MCF 10A (cell line): ENCODE measurements at regions of chr16 and their contacts with region 1.

Region 1: DNA sequence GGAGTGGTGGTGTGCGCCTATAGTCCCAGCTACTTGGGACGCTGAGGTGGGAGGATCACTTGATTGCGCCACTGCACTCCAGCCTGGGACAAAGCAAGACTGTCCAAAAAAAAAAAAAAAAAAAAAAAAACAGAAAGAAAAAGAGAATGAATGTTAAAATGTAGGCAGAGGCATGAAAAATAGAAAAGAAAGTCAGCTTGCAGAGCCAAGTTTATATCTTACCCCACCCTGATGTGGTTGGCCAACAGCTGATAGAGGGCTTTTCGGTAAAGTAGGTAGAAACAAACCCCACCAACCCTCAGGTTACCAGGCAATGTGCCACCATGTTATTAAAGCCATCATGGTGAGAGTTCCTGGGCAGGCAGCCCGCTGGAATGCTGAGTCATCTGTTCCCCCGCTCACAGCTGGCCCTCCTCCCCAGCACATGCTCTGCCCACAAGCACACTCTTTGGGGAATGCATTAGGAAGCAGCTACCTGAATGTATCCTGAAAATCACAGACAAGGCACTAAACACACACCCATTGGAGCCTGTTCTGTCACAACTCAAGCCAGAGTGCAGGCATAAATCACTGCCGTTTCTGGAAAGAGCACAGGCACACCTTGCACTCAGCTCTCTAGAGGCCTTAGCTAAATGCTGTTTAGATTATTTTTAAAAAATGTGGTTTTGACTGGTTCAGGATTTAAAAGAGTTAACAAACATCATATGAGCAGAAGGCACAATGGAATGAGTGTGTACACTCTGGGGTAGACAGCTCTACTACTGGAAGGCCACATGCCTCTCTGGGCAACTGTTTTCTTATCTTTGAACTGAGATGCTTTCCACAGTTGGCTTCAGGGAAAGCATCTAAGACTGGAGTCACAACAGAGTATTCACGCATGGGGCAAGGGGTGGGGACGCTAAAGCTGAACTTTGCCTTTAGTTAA is 128.5 kb downstream of the PARN start:
- DNase-seq: peak; percentile 96
- H3K4me3 Mint-ChIP-seq: peak overlapping the region; percentile 57
- H3K27ac Mint-ChIP-seq: peak overlapping the region; percentile 78
- H3K4me1 Mint-ChIP-seq: peaks cover 56% of the 10 kb centered on the region
- H3K27me3 Mint-ChIP-seq: no peaks in the 10 kb centered on the region
- CTCF ChIP-seq: no peak

Region 2: GRCh38 chr16:14436401-14436955 is 65.1 kb before region 1 on chr16:
- CTCF ChIA-PET with region 1: no interaction called
- POLR2A ChIA-PET with region 1: no interaction called
- intact Hi-C with region 1: no loop called
- DNase-seq: no peak
- H3K4me3 Mint-ChIP-seq: no peak overlapping the region
- H3K27ac Mint-ChIP-seq: no peak overlapping the region
- H3K4me1 Mint-ChIP-seq: no peaks in the 10 kb centered on the region
- H3K27me3 Mint-ChIP-seq: no peaks in the 10 kb centered on the region
- CTCF ChIP-seq: no peak

Region 3: DNA sequence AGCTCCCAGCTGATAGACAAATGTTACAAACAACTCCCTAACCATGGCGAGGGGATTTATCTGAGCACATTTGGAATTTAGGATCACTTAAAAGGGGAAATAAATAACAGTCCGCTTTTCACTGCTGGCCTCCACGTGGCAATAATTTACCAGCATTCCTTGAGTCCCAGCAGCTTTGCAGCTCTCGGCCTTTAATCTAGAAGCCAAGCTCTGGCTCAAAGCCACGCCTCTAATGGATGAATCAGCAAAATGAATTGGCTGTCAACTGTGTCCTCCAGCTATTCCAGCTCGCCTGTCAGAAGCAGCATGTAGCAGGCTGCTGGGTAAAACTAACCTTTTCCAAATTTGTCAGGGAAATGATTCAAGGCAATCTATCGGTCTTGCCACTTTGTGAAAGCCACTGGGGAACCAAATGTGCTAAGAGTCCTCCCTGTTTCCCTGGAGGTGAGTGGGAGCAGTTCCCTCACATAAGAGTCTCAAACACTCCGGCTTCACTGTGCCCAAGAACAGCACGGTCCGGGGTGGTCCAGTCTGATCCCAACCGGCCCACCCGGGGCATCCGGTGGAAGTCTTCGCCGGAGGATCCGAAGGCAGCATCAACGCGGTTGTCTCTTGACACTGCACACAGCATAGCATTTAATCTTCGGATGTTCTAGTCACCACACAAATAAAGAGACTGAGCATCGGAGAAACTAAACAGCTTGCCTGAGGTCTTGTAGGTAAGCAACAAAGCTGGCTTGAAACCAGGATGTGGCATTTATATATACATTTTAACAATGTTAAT is 14.9 kb before region 1 on chr16:
- CTCF ChIA-PET with region 1: interaction called, 12 read pairs
- POLR2A ChIA-PET with region 1: interaction called, 119 read pairs
- intact Hi-C with region 1: loop called (anchors 1 kb)
- DNase-seq: peak; percentile 96
- H3K4me3 Mint-ChIP-seq: peak overlapping the region; percentile 68
- H3K27ac Mint-ChIP-seq: peak overlapping the region; percentile 67
- H3K4me1 Mint-ChIP-seq: peaks cover 11% of the 10 kb centered on the region
- H3K27me3 Mint-ChIP-seq: no peaks in the 10 kb centered on the region
- CTCF ChIP-seq: no peak

Region 4: GRCh38 chr16:14562691-14563491 is 61.3 kb after region 1 on chr16:
- CTCF ChIA-PET with region 1: interaction called, 5 read pairs
- POLR2A ChIA-PET with region 1: interaction called, 12 read pairs
- intact Hi-C with region 1: no loop called
- DNase-seq: peak; percentile 84
- H3K4me3 Mint-ChIP-seq: no peak overlapping the region
- H3K27ac Mint-ChIP-seq: no peak overlapping the region
- H3K4me1 Mint-ChIP-seq: peaks cover 38% of the 10 kb centered on the region
- H3K27me3 Mint-ChIP-seq: no peaks in the 10 kb centered on the region
- CTCF ChIP-seq: peak; percentile 22